Activated CD4-positive, alpha-beta T cell treated with anti-CD3 and anti-CD28 coated beads, Interleukin-2, amount 10 ng/mL, durations not matched to agents 24 days and 14 days (primary cell): ENCODE measurements at regions of chr11 and their contacts with region 1.

Region 1: DNA sequence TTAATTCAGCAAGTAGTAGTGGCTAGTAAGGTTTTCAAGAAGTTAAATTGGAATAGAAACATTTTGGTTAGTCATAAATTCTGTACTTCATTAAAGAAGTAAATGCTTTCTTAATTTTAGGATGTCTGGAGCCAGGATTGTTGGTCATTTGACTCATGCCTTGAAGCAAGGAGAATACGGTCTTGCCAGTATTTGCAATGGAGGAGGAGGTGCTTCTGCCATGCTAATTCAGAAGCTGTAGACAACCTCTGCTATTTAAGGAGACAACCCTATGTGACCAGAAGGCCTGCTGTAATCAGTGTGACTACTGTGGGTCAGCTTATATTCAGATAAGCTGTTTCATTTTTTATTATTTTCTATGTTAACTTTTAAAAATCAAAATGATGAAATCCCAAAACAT is 25.8 kb downstream of the ACAT1 start:
- DNase-seq: no peak
- H3K4me3 Mint-ChIP-seq: no peak overlapping the region
- H3K27ac Mint-ChIP-seq: no peak overlapping the region
- H3K4me1 Mint-ChIP-seq: peaks cover 11% of the 10 kb centered on the region
- H3K27me3 Mint-ChIP-seq: no peaks in the 10 kb centered on the region

Region 2: DNA sequence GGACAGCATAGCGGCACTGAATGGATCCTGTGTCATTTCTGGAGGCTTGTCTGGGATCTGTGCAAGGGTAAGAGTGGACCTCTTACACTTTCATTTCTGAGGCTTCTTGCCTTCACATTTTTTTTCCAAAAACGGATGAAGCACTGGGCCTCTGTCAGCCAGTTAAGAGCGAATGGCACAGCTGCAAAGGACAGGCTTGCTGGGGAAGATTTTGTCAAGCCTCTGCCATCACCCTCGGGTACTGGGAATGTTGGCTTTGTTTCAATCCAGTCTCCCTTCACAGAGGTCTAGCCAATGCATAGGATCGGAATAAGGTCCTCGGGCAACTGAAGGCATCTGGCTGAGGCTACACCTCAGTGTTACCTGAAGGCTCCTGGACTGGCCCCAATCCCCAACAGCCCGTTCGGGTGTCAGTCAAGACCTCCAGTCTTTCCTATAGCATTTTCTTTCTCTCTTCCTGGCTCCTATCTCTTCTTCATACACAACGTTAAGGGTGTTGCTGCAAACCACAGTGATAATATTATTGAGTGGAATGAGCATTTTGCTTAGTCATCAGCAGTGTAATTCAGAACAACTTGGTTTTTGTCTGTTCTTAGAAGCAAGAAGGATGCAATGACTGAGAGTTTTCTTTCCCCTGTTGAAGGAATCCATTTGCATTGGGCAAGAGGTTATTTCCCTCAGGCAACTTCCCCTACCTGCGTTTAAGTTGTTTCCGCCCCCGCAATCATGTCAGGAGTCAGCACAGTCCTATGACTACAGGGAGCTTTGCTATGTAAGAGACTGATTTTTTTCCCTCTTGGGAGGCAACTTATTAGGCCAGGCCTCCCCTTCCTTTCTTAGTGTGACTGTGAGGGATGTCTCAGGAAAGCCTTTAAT is 52.5 kb after region 1 on chr11:
- intact Hi-C with region 1: loop called (anchors 10 kb)
- DNase-seq: peak; percentile 77
- H3K4me3 Mint-ChIP-seq: peak overlapping the region; percentile 16
- H3K27ac Mint-ChIP-seq: peak overlapping the region; percentile 79
- H3K4me1 Mint-ChIP-seq: peaks cover 35% of the 10 kb centered on the region
- H3K27me3 Mint-ChIP-seq: no peaks in the 10 kb centered on the region